Activated naive CD4-positive, alpha-beta T cell treated with anti-CD3 and anti-CD28 coated beads for 36 hours (primary cell): ENCODE measurements at regions of chr12 and their contacts with region 1.

Region 1: DNA sequence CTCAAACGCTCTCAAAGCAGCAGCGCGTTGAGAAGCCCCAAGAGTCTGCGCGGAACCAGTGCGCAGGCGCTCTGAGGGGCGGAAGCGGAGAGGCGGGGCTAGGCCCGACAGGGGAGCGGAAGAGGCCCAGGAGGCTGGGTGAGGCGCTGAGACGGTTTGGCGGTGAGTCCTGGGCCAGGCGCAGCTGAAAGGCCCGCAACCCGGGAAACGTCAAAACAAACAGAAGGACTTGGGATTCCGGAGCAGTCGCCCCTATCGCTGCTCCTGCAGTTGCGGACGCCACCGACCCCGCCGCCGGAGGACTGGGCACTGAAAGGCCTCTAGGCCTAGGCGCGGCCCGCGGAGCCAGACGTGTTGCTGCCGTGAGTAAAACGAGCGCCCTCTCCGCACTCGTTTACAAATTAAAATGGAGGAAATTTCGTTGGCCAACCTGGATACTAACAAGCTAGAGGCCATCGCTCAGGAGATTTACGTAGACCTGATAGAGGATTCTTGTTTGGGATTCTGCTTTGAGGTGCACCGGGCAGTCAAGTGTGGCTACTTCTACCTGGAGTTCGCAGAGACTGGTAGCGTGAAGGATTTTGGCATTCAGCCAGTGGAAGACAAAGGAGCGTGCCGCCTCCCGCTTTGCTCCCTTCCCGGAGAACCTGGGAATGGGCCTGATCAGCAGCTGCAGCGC is at the start of gene ATXN7L3B:
- DNase-seq: peak; percentile 94
- H3K4me3 Mint-ChIP-seq: peak within 1 kb of the TSS; percentile 91
- H3K27ac Mint-ChIP-seq: peak within 1 kb of the TSS; percentile 97
- H3K4me1 Mint-ChIP-seq: peaks cover 48% of the 10 kb centered on the region
- H3K27me3 Mint-ChIP-seq: no peaks in the 10 kb centered on the region
- total RNA-seq, gene ATXN7L3B: 19.8 to 19.9 TPM

Region 2: DNA sequence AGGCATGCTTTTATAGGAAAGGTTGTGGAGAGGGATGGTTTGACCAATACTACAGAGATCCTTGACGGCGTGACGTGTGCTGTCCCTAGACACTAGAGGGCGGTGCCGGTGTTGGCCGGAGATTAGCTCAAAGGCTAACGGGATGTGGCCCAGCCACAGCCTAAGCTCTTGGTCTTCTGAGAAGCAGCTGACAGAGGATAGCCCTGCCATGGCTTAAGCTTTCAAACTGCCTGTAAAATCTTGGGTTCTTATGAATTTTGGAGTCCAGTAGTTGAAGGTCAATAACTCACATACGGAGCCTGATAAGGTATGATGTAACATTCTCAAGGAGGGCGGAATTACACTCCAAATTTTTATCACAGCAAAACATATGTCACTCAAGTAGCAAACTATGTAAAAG is 515.9 kb before region 1 on chr12:
- CTCF ChIA-PET with region 1: no interaction called
- intact Hi-C with region 1: loop called (anchors 1 kb)
- DNase-seq: peak; percentile 51
- H3K4me3 Mint-ChIP-seq: no peak overlapping the region
- H3K27ac Mint-ChIP-seq: no peak overlapping the region
- H3K4me1 Mint-ChIP-seq: no peaks in the 10 kb centered on the region
- H3K27me3 Mint-ChIP-seq: no peaks in the 10 kb centered on the region

Region 3: GRCh38 chr12:74111688-74112360 is 426.0 kb before region 1 on chr12:
- CTCF ChIA-PET with region 1: no interaction called
- intact Hi-C with region 1: loop called (anchors 5 kb)
- DNase-seq: peak; percentile 10
- H3K4me3 Mint-ChIP-seq: no peak overlapping the region
- H3K27ac Mint-ChIP-seq: no peak overlapping the region
- H3K4me1 Mint-ChIP-seq: no peaks in the 10 kb centered on the region
- H3K27me3 Mint-ChIP-seq: no peaks in the 10 kb centered on the region

Region 4: DNA sequence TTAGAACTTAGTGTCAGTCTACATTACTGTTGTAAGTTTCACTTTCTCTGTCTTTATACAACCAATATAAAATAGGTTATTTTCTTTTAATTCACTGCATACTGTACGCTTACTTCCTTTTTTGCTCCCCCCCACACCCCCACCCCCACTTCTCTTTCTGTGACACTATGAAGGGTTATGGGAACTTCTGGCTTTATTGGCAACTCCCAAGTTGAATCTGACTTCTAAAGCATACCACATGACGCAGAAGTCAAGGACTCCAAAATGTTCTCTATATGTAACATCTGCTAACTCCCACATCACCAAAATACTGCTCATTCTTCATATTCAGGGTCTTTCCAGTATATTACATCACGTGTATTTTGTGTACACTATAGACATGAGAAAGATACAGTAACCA is 81.4 kb before region 1 on chr12:
- CTCF ChIA-PET with region 1: no interaction called
- intact Hi-C with region 1: no loop called
- DNase-seq: no peak
- H3K4me3 Mint-ChIP-seq: no peak overlapping the region
- H3K27ac Mint-ChIP-seq: no peak overlapping the region
- H3K4me1 Mint-ChIP-seq: no peaks in the 10 kb centered on the region
- H3K27me3 Mint-ChIP-seq: no peaks in the 10 kb centered on the region